ENCODE measurements at regions of chr7 and their contacts with region 1.

Region 1: DNA sequence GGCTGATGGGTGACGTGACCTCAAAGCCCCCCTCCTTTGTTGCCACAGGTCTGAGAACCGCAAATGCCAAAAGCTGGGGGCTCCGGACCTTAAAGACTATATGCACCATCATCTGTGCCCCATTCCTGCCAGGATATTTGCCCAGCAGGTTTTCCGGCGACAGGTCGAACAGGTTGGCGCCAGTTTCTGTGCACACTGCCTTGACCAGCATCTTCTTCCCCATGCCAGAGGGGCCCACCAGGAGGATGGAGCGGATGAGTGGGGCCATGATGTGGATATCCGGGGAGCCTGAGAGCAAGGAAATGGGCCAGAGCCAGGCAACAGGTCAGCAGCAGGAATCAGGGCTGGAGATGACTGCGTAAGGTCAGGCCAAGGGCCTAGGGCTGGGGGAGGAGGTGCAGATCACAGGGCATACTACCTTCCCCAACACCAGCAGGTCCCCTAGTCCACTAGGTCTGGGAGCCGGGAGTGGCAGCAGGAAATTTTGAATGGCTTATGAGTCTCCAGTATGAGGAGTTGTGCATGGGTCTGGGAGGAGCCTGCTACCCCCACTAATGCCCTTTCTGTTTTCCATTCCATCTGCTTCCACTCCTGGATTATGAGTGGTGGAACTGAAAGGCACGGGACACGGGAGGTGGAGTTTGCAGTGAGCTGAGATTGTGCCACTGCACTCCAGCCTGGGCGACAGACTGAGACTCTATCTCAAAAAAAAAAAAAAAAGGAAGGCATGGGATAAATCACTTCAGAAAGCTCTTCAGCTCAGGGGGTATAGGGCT is 6.3 kb upstream of the ASB10 start:
- DNase-seq: no peak

Region 2: DNA sequence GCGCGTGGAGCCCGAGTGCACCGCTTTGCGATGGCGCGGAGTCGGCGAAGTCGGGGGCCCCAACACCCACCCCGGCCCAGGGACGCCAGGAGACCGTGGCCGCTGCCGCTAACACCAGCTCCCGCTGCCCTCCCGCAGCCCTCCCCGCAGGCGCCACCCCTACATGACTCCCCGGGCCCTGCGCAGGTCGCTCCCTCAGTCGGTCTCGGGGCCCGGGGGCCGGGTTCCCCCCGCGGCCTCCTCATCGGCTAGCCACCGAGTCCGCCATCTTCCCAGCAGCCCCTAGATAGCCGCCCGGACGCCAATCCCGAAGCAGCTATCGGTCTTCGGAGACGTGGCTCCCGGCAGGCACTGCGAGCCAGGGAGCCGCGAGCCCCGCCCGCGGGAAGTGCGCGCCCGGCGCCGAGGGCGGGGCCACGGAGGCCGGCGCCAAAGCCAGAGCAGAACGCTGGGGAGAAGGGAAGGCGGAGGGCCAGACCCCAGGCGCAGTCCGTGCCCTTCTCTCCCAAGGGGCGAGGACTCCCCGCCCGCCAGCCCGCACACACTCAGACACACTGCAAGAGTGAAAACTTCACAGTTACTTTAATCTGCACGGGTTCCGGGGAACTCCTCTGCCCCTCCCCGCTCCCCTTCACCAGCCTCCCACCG is 112.7 kb before region 1 on chr7 and contains the start of gene FASTK:
- intact Hi-C with region 1: no loop called
- DNase-seq: peak; percentile 97
- total RNA-seq, gene FASTK: 35.5 to 56.3 TPM

Region 3: GRCh38 chr7:151366166-151366879 is 172.9 kb after region 1 on chr7:
- intact Hi-C with region 1: no loop called
- DNase-seq: peak; percentile 19

Region 4: GRCh38 chr7:151432791-151433521 is 239.6 kb after region 1 on chr7:
- intact Hi-C with region 1: loop called in 1 of 2 experiments (anchors 2 kb)
- DNase-seq: peak; percentile 64

Measured in posterior vena cava (tissue), 2 donors.